Body of pancreas (tissue), 4 donors: ENCODE measurements at regions of chr1 and their contacts with region 1.

Region 1: GRCh38 chr1:156623946-156624813 is 5.0 kb downstream of the HAPLN2 start:
- DNase-seq: peak in 3 of 4 donors; percentile 49 to 53 (median 49)
- ATAC-seq: peak; percentile 48
- H3K4me3 ChIP-seq: no peak overlapping the region
- H3K27ac ChIP-seq: no peak overlapping the region
- H3K4me1 ChIP-seq: peaks cover 21% of the 10 kb centered on the region
- H3K27me3 ChIP-seq: peaks cover 0 to 23% of the 10 kb centered on the region in 2 donors
- CTCF ChIP-seq: peak in 4 of 7 experiments; percentile 9 to 25 (median 20)
- POLR2A ChIP-seq: no peak

Region 2: GRCh38 chr1:156465747-156466365 is 158.3 kb before region 1 on chr1:
- intact Hi-C with region 1: no loop called
- DNase-seq: no peak
- ATAC-seq: no peak
- H3K4me3 ChIP-seq: no peak overlapping the region
- H3K27ac ChIP-seq: no peak overlapping the region
- H3K4me1 ChIP-seq: peaks cover 14% of the 10 kb centered on the region
- H3K27me3 ChIP-seq: no peaks in the 10 kb centered on the region
- CTCF ChIP-seq: no peak
- POLR2A ChIP-seq: no peak

Region 3: GRCh38 chr1:156659994-156660751 is 36.0 kb after region 1 on chr1:
- intact Hi-C with region 1: loop called (anchors 5 kb)
- DNase-seq: peak; percentile 92 to 94 (median 92)
- ATAC-seq: peak; percentile 82
- H3K4me3 ChIP-seq: no peak overlapping the region
- H3K27ac ChIP-seq: peak overlapping the region in 3 of 4 donors; percentile 55 to 68 (median 58)
- H3K4me1 ChIP-seq: peaks cover 56% of the 10 kb centered on the region
- H3K27me3 ChIP-seq: peaks cover 0 to 13% of the 10 kb centered on the region in 2 donors
- CTCF ChIP-seq: peak; percentile 96 to 99 (median 98)
- POLR2A ChIP-seq: no peak

Region 4: DNA sequence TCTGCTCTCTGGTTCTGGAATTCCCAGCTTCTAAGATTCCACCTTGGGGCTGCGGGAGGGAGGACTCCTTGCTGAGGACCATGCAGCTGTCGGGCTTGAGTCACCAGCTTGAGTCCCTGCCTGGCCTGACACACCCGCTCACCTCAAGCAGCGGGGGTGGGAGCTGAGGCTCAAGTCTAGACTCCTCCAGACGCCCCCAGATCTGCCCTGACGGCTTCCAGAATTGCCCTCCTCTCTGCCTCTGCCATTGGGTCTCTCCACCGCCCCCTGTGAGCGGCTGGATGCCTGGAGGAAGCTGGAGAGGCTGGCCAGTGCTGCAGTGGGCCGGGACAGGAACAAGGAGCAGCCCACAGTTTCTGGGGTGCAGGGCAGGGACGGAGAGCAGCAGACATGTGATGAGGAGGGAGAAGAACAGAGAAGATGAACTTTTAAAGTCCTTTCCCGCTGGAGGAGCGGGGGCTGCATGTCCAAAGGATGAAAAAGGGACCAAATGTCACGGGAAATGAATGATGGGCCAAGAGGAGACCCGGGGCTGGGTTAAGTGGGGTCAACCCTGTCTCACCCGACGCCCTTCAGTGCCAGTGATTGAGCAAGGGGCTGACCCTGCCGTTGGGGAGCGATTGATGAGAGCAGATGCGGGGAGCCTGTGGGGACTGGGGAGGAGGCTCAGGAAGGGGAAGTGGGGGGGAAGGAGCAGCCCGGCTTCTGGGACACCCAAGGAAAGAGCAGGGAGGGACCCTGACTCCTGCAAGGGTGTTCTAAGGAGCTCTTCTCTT is 67.7 kb after region 1 on chr1:
- intact Hi-C with region 1: no loop called
- DNase-seq: no peak
- ATAC-seq: no peak
- H3K4me3 ChIP-seq: no peak overlapping the region
- H3K27ac ChIP-seq: peak overlapping the region in 1 of 4 donors; percentile 6
- H3K4me1 ChIP-seq: peaks cover 30% of the 10 kb centered on the region
- H3K27me3 ChIP-seq: no peaks in the 10 kb centered on the region
- CTCF ChIP-seq: no peak
- POLR2A ChIP-seq: no peak